ENCODE measurements at regions of chr4 and their contacts with region 1.

Region 1: DNA sequence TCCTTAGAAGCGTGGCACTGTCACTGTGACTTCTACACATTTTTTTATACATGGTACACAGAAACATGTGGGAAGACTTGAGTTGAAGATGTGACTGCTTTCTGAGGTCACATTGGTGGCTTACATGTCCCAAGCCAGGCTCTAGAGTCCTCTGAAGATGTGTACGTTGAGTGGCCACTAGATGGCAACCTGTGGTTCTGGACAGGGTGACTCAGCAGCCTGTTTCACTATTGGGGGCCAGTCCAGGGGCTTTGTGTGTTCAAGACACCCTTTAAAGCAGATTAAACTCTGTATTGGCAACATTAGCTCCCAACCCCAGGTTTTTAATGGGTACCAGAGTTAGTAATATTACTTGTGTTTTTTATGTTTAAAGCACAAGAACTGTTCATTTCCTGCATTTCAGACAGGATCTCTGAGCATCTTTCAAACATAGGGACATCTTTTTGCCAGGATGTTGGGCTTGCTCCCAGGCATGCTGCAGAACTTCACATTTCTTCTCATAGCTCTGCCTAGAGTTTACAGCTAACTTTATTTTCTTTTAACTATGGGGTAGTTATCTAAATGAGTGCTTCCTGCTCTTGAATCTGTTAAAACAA is 53.0 kb downstream of the DCUN1D4 start:
- DNase-seq: peak; percentile 70
- CTCF ChIP-seq: peak; percentile 74

Region 2: DNA sequence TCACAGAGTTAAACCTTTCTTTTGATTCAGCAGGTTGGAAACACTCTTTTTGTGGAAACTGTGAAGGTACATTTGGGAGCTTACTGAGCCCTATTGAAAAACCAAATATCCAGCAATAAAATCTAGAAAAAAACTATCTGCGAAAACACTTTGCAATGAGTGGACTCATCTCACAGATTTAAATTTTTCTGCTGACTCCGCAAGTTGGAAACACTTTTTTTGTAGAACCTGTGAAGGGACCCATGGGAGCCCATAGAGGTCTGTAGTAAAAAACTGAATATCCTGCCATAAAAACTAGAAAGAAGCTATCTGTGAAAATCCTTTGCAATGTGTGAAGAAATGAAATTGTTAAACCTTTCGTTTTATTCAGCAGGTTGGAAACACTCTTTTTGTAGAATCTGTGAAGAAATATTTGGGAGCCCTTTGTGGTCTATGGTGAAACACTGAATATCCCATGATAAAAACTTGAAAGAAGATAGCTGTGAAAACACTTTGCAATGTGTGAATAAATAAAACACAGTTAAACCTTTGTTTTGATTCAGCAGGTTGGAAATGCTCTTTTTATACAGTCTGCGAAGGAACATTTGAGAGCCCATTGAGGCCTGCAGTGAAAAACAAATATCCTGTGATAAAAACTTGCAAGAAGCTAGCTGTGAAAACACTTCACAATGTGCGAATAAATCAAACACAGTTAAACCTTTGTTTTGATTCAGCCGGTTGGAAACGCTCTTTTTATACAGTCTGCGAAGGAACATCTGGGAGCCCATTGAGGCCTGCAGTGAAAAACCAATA is 75.3 kb before region 1 on chr4:
- CTCF ChIA-PET with region 1: no interaction called
- POLR2A ChIA-PET with region 1: no interaction called
- DNase-seq: no peak
- CTCF ChIP-seq: no peak

Region 3: DNA sequence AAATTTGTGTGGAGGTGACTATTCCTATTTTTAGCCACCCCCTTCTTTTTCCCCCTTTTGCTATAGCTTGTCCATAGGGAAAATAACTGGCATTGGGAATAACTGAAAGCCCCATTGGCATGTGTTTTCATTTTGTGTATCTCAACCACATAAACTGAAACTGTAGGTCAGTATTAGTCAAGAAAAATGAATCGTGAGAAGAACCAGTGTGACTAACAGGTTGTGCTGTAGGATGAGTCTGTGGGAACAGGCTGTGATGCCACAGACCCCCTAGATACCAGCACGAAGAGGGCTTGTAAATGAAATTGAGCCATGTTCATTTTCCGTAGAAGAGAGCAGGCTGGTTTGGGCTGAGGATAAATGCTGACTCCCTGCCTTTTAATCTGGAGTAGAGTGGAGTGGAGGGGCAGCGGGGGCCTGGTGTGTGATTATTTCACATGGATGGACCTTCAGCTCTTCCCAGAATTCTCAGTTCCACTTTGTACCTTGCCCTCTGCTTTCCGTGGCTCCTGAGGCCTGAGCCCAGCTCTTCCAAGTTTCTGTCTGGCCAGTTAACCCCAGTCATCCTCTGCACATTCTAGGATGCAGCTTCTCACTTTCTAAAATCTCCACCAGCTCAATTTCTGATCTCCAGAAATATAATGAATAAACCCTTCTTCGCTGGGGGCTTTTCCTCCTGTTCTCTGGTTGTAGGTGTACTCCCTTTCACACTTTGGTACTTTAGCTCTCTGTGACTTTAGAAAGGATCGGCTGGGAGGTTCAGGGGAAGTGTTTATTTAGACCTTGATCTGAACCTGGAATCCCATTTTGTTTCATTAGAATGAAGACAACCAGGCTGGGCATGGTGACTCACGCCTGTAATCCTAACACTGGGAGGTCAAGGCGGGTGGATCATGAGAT is 15.6 kb before region 1 on chr4:
- CTCF ChIA-PET with region 1: interaction called, 15 read pairs
- POLR2A ChIA-PET with region 1: no interaction called
- DNase-seq: no peak
- CTCF ChIP-seq: no peak

Region 4: GRCh38 chr4:51906167-51906958 is 10.5 kb after region 1 on chr4:
- CTCF ChIA-PET with region 1: interaction called, 41 read pairs
- POLR2A ChIA-PET with region 1: no interaction called
- DNase-seq: peak; percentile 51
- CTCF ChIP-seq: no peak

Measured in GM10248 (cell line).